Endothelial cell of umbilical vein (primary cell): ENCODE measurements at regions of chr1 and their contacts with region 1.

Region 1: GRCh38 chr1:61436016-61436415 is 288.9 kb downstream of the TM2D1 start:
- DNase-seq: peak; percentile 98
- H3K4me3 ChIP-seq: no peak overlapping the region
- H3K27ac ChIP-seq: peak overlapping the region; percentile 94
- H3K4me1 ChIP-seq: peaks cover 42% of the 10 kb centered on the region
- H3K27me3 ChIP-seq: no peaks in the 10 kb centered on the region
- CTCF ChIP-seq: peak; percentile 80 to 81
- POLR2A ChIP-seq: peak; percentile 67

Region 2: GRCh38 chr1:60153961-60154360 is 1282.1 kb before region 1 on chr1:
- CTCF ChIA-PET with region 1: no interaction called
- POLR2A ChIA-PET with region 1: no interaction called
- dilution Hi-C with region 1: no loop called
- intact Hi-C with region 1: loop called (anchors 5 kb)
- DNase-seq: no peak
- H3K4me3 ChIP-seq: no peak overlapping the region
- H3K27ac ChIP-seq: no peak overlapping the region
- H3K4me1 ChIP-seq: no peaks in the 10 kb centered on the region
- H3K27me3 ChIP-seq: no peaks in the 10 kb centered on the region
- CTCF ChIP-seq: no peak
- POLR2A ChIP-seq: no peak

Region 3: GRCh38 chr1:60978421-60979357 is 457.3 kb before region 1 on chr1:
- CTCF ChIA-PET with region 1: interaction called, 4 read pairs
- POLR2A ChIA-PET with region 1: no interaction called
- dilution Hi-C with region 1: no loop called
- intact Hi-C with region 1: loop called (anchors 5 kb)
- DNase-seq: peak; percentile 69
- H3K4me3 ChIP-seq: no peak overlapping the region
- H3K27ac ChIP-seq: no peak overlapping the region
- H3K4me1 ChIP-seq: peaks cover 6% of the 10 kb centered on the region
- H3K27me3 ChIP-seq: no peaks in the 10 kb centered on the region
- CTCF ChIP-seq: peak; percentile 60 to 77
- POLR2A ChIP-seq: no peak

Region 4: GRCh38 chr1:61077676-61078541 is 358.1 kb before region 1 on chr1:
- CTCF ChIA-PET with region 1: interaction called, 7 read pairs
- POLR2A ChIA-PET with region 1: no interaction called
- dilution Hi-C with region 1: no loop called
- intact Hi-C with region 1: loop called (anchors 1 kb)
- DNase-seq: peak; percentile 100
- H3K4me3 ChIP-seq: peak overlapping the region; percentile 44 to 97 (median 77)
- H3K27ac ChIP-seq: peak overlapping the region; percentile 45
- H3K4me1 ChIP-seq: peaks cover 41% of the 10 kb centered on the region
- H3K27me3 ChIP-seq: no peaks in the 10 kb centered on the region
- CTCF ChIP-seq: no peak
- POLR2A ChIP-seq: peak; percentile 10

Region 5: DNA sequence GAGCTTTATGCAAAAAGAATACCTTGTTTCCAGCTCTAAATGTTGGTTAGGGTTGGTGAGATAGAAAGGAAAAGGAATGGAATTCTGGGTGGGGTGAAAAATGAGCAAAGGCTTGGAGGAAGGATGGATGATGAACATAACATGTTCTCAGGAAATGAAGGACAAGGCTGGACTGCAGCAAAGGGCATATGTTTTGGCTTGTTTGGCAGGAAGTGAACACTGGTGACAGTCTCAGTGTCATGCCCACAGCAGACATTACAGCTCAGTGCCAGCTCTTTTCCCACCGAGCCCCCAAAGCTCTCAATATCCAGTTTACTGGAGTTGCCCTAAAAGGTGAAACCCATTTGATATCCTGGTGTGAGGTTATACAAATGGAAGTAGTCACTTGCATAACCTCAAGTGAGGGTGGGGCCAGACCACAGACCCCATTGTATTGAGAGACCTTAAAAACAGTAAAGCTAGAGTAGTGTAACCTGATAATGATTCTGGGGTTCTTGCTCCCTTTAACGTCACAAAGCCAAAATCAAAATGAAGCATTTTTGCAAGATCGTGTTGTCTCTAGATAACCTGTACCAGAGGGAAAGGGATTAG is 83.1 kb before region 1 on chr1:
- CTCF ChIA-PET with region 1: interaction called, 8 read pairs
- POLR2A ChIA-PET with region 1: no interaction called
- dilution Hi-C with region 1: no loop called
- intact Hi-C with region 1: loop called (anchors 1 kb)
- DNase-seq: no peak
- H3K4me3 ChIP-seq: no peak overlapping the region
- H3K27ac ChIP-seq: no peak overlapping the region
- H3K4me1 ChIP-seq: peaks cover 18% of the 10 kb centered on the region
- H3K27me3 ChIP-seq: no peaks in the 10 kb centered on the region
- CTCF ChIP-seq: no peak
- POLR2A ChIP-seq: no peak

Region 6: GRCh38 chr1:61403679-61404596 is 32.1 kb before region 1 on chr1:
- CTCF ChIA-PET with region 1: interaction called, 4 read pairs
- POLR2A ChIA-PET with region 1: no interaction called
- dilution Hi-C with region 1: no loop called
- intact Hi-C with region 1: loop called (anchors 1 kb)
- DNase-seq: peak; percentile 93
- H3K4me3 ChIP-seq: peak overlapping the region in 1 of 3 experiments; percentile 0
- H3K27ac ChIP-seq: peak overlapping the region; percentile 91
- H3K4me1 ChIP-seq: peaks cover 23% of the 10 kb centered on the region
- H3K27me3 ChIP-seq: no peaks in the 10 kb centered on the region
- CTCF ChIP-seq: no peak
- POLR2A ChIP-seq: no peak

Region 7: GRCh38 chr1:61588736-61589672 is 153.0 kb after region 1 on chr1:
- CTCF ChIA-PET with region 1: no interaction called
- POLR2A ChIA-PET with region 1: no interaction called
- dilution Hi-C with region 1: no loop called
- intact Hi-C with region 1: loop called (anchors 1 kb)
- DNase-seq: peak; percentile 69
- H3K4me3 ChIP-seq: no peak overlapping the region
- H3K27ac ChIP-seq: no peak overlapping the region
- H3K4me1 ChIP-seq: no peaks in the 10 kb centered on the region
- H3K27me3 ChIP-seq: peaks cover 0 to 2% of the 10 kb centered on the region in 2 experiments
- CTCF ChIP-seq: peak; percentile 83 to 86
- POLR2A ChIP-seq: no peak